Activated naive CD4-positive, alpha-beta T cell treated with anti-CD3 and anti-CD28 coated beads for 36 hours (primary cell): ENCODE measurements at regions of chr5 and their contacts with region 1.

Region 1: DNA sequence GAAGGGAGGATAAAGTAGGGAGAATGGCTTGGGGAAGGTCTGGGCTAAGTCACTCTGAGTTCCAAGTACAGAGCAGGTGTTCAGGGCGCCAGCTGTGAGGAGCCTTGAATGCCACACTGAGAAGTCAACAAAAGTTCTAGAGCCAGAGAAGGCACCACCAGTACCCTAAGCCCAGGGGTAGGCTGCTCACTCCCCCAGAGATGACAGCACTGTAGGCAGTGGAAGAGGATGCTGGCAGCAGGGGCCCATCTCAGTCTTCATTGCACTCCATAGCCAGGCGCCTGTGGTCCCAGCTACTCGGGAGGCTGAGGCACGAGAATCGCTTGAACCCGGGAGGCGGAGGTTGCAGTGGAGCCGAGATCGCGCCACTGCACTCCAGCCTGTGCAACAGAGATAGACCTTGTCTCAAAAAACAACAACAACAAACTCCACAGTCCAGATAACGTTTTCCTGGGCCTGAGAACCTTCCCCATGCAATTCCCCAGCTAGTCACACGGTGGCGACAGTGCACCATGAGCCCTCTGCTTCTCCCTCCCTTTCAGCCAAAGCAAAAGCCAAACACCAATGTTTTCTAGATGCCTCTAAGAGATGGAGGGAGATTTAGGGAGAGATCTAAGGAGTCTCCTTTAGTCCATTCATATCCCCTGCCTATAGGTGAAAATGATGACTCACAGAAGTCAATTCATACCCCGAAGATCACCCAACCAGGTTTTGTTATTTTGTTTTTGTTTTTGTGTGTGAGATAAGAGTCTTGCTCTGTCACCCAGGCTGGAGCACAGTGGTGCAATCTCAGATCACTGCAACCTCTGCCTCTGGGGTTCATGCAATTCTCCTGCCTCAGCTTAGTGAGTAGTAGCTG is 19.8 kb upstream of the NSD1 start:
- DNase-seq: peak; percentile 89
- H3K4me3 Mint-ChIP-seq: no peak overlapping the region
- H3K27ac Mint-ChIP-seq: no peak overlapping the region
- H3K4me1 Mint-ChIP-seq: peaks cover 20% of the 10 kb centered on the region
- H3K27me3 Mint-ChIP-seq: no peaks in the 10 kb centered on the region

Region 2: DNA sequence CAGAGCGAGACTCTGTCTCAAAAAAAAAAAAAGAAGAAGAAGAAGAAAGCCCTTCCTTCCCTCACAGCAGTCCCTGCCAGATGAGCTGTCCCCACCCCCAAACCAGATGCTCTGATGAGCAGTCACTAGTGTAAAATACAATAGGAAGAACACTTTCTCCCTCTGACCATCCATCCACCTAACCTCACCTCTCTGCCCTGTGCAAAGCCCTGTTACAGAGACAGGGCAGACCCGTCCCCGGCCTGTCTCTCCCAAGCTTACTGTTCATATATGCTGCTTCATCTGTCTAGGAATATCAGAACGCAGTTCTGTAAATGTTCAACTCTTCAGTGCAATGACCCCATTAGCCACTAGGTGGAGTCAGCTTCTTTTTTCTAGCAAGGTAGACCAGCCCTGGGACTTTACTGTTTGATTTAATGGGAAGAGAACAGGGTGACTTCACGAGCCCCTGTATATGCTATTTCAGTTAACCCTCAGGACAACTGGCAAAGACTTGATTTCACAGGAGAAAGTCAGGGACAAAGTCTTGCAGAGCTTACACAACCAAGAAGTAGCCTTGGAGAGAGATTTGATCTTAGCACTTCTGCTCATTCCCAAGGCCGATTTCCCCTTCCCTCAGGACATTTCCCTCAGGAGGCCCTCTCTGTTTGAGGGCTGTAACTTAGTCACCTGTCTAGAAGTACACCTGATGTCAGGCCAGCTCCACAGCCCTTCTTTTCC is 42.0 kb before region 1 on chr5:
- CTCF ChIA-PET with region 1: interaction called, 85 read pairs
- intact Hi-C with region 1: loop called (anchors 1 kb)
- DNase-seq: peak; percentile 87
- H3K4me3 Mint-ChIP-seq: no peak overlapping the region
- H3K27ac Mint-ChIP-seq: no peak overlapping the region
- H3K4me1 Mint-ChIP-seq: peaks cover 3% of the 10 kb centered on the region
- H3K27me3 Mint-ChIP-seq: no peaks in the 10 kb centered on the region

Region 3: DNA sequence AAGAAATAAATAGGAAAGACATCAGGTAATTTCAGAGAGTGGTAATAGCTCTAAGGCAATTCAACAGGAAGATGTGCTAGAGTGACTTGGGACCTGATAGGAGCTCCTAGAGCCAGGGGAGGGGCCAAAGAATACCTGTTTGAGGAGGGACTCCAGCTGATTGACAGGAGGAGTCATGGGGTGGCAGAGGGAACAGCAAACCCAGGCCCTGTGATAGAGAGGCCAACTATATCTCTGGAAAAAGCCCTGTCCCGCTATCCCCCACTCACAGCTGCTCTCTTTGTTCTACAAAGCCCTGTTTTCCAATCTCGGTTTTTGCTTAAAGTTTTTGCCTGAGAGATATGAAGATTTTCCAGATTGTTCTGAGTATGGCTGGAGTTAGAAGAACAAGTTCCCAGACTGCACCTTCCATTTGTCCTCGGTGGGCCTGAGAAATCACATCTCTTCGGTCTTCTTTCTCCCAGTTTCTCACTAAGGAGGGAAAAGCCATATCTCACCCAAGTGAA is 10.7 kb after region 1 on chr5:
- CTCF ChIA-PET with region 1: interaction called, 26 read pairs
- intact Hi-C with region 1: no loop called
- DNase-seq: no peak
- H3K4me3 Mint-ChIP-seq: no peak overlapping the region
- H3K27ac Mint-ChIP-seq: no peak overlapping the region
- H3K4me1 Mint-ChIP-seq: peaks cover 19% of the 10 kb centered on the region
- H3K27me3 Mint-ChIP-seq: no peaks in the 10 kb centered on the region

Region 4: DNA sequence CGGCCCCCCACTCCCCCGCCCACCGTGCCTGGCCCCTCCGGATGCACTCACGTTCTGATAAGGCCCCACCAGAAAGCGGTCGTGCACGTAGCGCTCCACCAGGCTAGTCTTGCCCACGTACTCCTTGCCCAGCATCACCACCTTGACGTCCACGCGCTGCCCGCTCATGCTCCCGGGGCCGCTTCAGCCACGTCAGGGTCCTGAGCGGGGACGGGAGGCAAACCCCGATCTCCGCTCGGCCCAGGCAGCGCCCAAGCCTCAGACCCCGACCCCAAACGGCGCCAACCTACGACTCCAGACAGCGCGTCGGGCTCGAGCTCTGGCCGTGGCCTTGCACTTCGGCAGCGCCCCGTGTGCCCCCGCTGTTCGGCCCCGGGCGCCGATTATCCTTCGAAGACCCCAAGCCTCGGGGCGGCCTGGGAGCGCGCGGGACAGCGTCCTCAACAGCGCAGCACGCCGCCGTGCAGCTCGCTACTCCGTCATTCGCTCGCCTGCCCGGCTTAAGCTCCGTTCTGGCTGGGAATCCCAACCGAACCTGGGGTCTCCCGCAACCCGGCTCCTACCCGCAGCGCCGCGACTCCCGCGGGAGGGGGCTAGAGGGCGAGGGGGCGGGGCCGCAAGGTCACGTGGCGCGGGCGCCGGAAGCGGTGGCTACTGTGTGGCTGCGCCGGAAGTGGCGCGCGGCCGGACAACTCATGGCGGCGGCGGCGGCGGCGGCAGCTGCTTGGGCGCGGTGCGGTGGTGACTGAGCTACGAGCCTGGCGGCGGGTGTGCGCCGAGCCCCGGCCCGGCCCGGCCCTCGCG is 189.5 kb after region 1 on chr5 and contains the starts of genes PRELID1 and RAB24:
- CTCF ChIA-PET with region 1: interaction called, 36 read pairs
- intact Hi-C with region 1: loop called (anchors 2 kb)
- DNase-seq: peak; percentile 89
- H3K4me3 Mint-ChIP-seq: peak within 1 kb of the TSS; percentile 95
- H3K27ac Mint-ChIP-seq: peak within 1 kb of the TSS; percentile 88
- H3K4me1 Mint-ChIP-seq: peaks cover 64% of the 10 kb centered on the region
- H3K27me3 Mint-ChIP-seq: no peaks in the 10 kb centered on the region
- total RNA-seq, gene PRELID1: 253 to 254 TPM
- total RNA-seq, gene RAB24: 10.9 to 13.2 TPM

Region 5: DNA sequence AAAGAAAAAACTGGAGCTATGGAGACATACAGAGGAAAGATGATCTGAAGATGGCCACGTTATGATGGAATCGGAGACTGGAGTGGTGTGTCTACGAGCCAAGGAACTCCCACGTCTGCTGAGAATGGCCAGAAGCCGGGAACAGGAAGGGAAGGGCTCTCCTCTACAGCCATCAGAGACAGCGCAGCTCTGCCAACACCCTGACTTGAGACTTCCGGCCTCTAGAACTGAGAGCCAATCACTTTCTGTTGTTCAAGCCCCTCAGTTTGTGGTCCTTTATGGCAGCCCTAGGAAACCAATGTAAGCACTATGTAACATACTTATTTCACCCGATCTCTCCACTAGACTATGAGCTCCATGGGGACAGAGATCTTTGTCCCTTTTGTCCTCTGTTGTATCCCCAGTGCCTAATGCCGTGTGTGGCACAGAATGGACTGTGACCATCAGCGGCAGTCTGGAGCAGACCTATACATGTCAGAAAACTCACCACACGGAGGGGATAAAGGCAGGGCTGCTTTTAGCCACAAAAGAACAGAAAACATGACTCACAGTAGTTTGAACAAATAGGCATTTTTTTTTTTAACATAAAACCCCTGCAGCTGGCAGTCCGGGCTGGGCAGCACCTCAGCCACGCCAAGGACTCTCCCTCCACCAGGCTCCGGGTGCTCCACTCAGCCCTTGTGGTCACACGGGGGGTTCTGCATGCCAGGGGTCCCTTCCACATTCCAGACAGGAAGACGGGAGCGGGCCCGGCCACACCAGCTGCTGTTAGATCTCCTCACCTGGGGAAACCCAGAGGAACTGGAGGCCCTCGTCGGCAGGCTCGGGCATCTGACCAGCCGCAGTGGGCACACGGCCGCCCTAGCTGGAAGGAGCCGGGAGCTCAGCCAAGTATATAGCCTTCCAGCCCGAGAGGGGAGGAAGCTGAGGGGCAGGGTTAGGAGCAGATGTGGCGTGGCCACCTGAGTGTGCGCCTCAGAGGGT is 214.0 kb after region 1 on chr5:
- CTCF ChIA-PET with region 1: no interaction called
- intact Hi-C with region 1: no loop called
- DNase-seq: peak; percentile 26
- H3K4me3 Mint-ChIP-seq: no peak overlapping the region
- H3K27ac Mint-ChIP-seq: peak overlapping the region; percentile 5
- H3K4me1 Mint-ChIP-seq: peaks cover 2% of the 10 kb centered on the region
- H3K27me3 Mint-ChIP-seq: no peaks in the 10 kb centered on the region

Region 6: GRCh38 chr5:177454397-177455035 is 340.7 kb after region 1 on chr5:
- CTCF ChIA-PET with region 1: interaction called, 3 read pairs
- intact Hi-C with region 1: loop called (anchors 1 kb)
- DNase-seq: peak; percentile 91
- H3K4me3 Mint-ChIP-seq: peak overlapping the region; percentile 79
- H3K27ac Mint-ChIP-seq: no peak overlapping the region
- H3K4me1 Mint-ChIP-seq: peaks cover 20% of the 10 kb centered on the region
- H3K27me3 Mint-ChIP-seq: no peaks in the 10 kb centered on the region